ENCODE measurements at regions of chr1 and their contacts with region 1.

Region 1: GRCh38 chr1:160251687-160252526 is 10.4 kb downstream of the DCAF8 start:
- DNase-seq: peak; percentile 74
- H3K4me3 Mint-ChIP-seq: no peak overlapping the region
- H3K27ac Mint-ChIP-seq: no peak overlapping the region
- H3K4me1 Mint-ChIP-seq: peaks cover 5% of the 10 kb centered on the region
- H3K27me3 Mint-ChIP-seq: no peaks in the 10 kb centered on the region

Region 2: DNA sequence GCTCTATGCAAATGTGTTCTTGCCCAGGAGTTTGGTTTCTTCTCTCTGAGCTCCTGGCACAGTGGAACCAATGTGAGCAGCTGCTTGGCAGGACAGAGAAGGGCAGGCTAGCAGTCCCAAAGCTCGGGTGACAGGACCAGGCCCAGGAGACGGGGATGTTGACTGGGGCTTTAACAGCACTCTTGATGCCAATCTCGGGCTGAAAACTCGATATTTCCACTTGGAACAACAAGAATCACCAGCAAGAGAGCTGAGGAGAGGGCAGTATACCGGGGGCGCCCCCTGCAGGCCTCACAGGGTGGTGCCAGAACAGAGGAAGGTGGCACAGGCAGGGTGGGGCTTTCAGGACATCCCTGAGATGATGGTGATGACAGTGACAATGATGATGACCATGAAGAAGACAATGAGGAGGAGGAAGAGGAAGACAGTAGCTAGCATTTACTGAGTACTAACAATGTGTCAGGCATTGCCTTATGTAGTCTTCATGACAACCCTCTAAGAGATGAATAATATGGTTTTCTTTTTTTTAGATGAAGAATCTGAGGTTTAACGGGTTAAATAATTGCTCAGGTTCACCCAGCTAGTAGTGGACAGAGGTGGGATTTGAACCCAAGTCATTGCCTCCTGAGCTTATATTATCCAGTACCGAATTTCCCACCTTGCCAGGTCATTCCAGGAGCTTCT is 173.3 kb before region 1 on chr1:
- CTCF ChIA-PET with region 1: interaction called, 12 read pairs
- DNase-seq: peak; percentile 78
- H3K4me3 Mint-ChIP-seq: no peak overlapping the region
- H3K27ac Mint-ChIP-seq: no peak overlapping the region
- H3K4me1 Mint-ChIP-seq: no peaks in the 10 kb centered on the region
- H3K27me3 Mint-ChIP-seq: peaks cover 72% of the 10 kb centered on the region

Region 3: GRCh38 chr1:160098852-160099561 is 152.9 kb before region 1 on chr1:
- CTCF ChIA-PET with region 1: interaction called, 28 read pairs
- DNase-seq: peak; percentile 99
- H3K4me3 Mint-ChIP-seq: peak overlapping the region; percentile 71
- H3K27ac Mint-ChIP-seq: peak overlapping the region; percentile 93
- H3K4me1 Mint-ChIP-seq: peaks cover 53% of the 10 kb centered on the region
- H3K27me3 Mint-ChIP-seq: peaks cover 7% of the 10 kb centered on the region

Region 4: DNA sequence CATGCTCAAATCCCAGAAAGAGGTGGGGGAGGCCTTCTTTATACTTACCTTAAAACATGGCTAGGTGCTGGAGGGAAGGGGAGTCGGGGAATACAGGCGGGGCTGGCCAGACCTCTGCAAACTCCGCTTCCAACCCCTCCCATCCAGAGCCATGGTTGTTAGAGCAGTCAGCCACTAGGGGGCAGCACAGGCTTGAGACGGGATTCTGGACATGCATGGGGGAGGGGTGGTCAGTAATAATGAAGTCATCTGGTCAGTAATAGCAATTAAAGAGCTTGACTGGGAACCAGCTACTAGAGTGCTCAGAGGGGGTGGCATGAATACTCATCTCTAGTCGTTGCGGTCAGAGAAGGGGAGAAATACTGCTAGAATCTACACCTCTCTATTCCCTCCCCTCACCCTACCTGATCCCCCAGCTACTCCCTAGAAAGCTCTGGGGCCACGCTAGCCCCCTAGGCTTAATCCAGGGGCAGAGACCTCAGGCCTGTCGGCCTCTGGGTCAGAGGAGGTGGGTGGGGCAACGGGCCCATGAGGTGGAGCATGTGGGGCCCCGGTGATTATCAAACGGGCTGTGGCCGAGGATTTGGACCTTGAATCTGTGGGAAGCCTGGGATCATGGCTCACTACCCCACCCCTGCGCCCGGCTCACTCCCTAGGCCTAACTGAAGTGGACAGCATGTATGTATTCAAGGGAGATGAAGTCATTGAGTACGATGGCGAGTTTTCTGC is 58.7 kb before region 1 on chr1:
- CTCF ChIA-PET with region 1: interaction called, 39 read pairs
- DNase-seq: peak; percentile 86
- H3K4me3 Mint-ChIP-seq: no peak overlapping the region
- H3K27ac Mint-ChIP-seq: no peak overlapping the region
- H3K4me1 Mint-ChIP-seq: no peaks in the 10 kb centered on the region
- H3K27me3 Mint-ChIP-seq: peaks cover 19% of the 10 kb centered on the region

Region 5: GRCh38 chr1:160232911-160233310 is 19.0 kb before region 1 on chr1:
- CTCF ChIA-PET with region 1: interaction called, 11 read pairs
- DNase-seq: no peak
- H3K4me3 Mint-ChIP-seq: no peak overlapping the region
- H3K27ac Mint-ChIP-seq: no peak overlapping the region
- H3K4me1 Mint-ChIP-seq: no peaks in the 10 kb centered on the region
- H3K27me3 Mint-ChIP-seq: no peaks in the 10 kb centered on the region

Region 6: GRCh38 chr1:160284782-160285344 is 33.0 kb after region 1 on chr1 and contains the start of gene PEX19:
- CTCF ChIA-PET with region 1: interaction called, 10 read pairs
- DNase-seq: peak; percentile 96
- H3K4me3 Mint-ChIP-seq: peak within 1 kb of the TSS; percentile 98
- H3K27ac Mint-ChIP-seq: peak within 1 kb of the TSS; percentile 88
- H3K4me1 Mint-ChIP-seq: peaks cover 20% of the 10 kb centered on the region
- H3K27me3 Mint-ChIP-seq: no peaks in the 10 kb centered on the region

Region 7: DNA sequence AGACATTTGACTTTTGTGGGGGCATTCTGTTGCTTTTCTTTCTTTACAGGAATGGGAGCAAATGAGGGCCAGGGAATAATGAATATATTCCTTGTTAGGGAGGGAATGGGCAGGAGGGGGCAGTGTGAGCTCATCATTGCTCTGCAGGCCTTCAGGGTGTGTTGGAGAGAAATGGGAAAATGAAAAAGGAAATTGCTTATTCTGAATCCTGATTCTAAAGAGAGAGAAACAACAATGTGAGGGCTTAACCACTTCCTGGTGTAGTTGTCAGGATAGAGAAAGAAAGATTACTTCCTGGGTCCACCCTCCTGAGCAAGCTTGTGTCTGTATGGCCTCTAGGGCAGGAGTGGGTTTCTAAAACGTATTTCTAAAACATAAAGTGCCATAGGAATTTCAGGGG is 176.7 kb after region 1 on chr1:
- CTCF ChIA-PET with region 1: no interaction called
- DNase-seq: peak; percentile 53
- H3K4me3 Mint-ChIP-seq: no peak overlapping the region
- H3K27ac Mint-ChIP-seq: peak overlapping the region; percentile 81
- H3K4me1 Mint-ChIP-seq: peaks cover 61% of the 10 kb centered on the region
- H3K27me3 Mint-ChIP-seq: peaks cover 3% of the 10 kb centered on the region

Region 8: GRCh38 chr1:160534823-160535605 is 283.1 kb after region 1 on chr1:
- CTCF ChIA-PET with region 1: no interaction called
- DNase-seq: no peak
- H3K4me3 Mint-ChIP-seq: no peak overlapping the region
- H3K27ac Mint-ChIP-seq: no peak overlapping the region
- H3K4me1 Mint-ChIP-seq: peaks cover 19% of the 10 kb centered on the region
- H3K27me3 Mint-ChIP-seq: no peaks in the 10 kb centered on the region

Measured in activated naive CD4-positive, alpha-beta T cell treated with anti-CD3 and anti-CD28 coated beads, Interleukin-2, amount 10 ng/mL, durations not matched to agents 7 days and 5 days (primary cell).